ENCODE measurements at regions of chr12 and their contacts with region 1.

Region 1: DNA sequence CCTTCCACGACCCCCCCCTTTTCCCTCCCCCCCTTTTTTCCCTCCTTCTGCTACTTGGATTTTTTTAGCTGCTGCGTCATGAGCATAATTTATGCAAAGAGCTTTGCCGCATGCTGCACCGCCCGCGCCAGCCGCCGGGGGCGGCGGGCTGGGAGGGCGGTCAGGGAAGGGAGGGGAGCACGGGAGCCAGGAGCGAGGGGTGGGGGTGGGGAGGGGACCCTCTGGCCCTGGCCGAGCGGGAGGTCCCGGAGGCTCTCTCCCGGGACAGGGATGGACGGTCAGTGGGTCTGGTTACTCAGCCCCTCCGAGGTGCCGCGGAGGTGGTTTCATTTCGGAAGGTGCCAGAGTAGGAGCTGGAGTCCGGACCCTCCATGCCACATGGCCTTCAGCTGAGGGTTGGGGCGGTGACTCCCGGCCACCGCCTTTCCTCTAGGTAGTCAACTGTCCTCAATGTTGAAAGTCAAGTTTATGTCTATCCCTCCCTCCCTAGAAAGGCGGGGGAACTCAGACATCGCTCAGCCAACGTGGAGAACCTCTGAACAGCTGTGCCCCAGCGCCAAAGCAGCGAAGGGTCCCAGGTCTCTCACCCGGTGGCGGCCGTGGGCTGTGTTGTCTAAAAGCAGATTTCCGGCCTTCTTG is at the start of gene POU6F1:
- DNase-seq: peak; percentile 76 to 82 (median 80)
- H3K4me3 ChIP-seq: peak within 1 kb of the TSS; percentile 90 to 99
- H3K4me3 Mint-ChIP-seq: peak within 1 kb of the TSS; percentile 90 to 96 (median 94)
- H3K27ac ChIP-seq: peak within 1 kb of the TSS; percentile 91
- H3K27ac Mint-ChIP-seq: peak within 1 kb of the TSS; percentile 94 to 99 (median 97)
- H3K4me1 ChIP-seq: peaks cover 25% of the 10 kb centered on the region
- H3K4me1 Mint-ChIP-seq: peaks cover 19 to 39% (median 29%) of the 10 kb centered on the region in 4 donors
- H3K27me3 ChIP-seq: no peaks in the 10 kb centered on the region
- H3K27me3 Mint-ChIP-seq: no peaks in the 10 kb centered on the region
- total RNA-seq, gene POU6F1: 71.9 to 79.8 TPM

Region 2: DNA sequence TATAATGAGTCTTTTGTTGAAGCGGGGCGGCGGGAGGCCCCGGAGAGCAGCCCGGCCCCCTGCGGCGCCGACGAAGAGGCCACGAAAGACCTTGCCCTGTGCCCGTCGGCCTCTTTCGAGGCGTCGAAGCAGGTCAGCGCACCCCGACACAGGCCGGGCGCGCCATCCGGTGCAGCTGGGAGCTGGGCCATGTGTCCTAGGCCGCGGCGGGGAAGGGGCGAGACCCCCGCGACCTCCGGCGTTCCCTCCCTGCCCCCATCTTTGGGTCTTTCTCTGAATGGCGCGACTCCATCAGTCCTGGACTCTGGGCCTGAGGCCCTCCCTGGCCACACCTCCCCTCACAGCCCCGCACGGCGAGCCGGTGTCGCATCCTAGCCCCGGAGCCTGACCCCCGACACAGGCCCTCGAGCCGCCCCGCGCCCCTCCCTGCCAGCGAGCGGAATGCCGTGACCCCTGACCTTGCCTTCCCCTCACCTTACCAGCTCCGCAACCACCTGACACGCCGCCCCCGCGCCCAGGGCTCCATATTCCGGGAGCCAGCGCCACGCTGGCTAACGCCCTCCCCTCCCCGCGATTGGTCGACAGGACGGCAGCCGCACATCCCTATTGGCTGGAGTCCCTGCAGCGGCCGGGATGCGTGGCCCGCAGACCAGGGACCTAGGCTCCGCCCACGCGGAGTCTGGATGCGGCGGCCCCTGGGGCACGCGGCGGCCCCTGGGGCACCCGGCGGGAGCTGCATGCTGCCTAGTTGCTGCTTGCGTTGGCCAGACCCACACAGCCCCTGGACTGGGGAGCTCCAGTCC is 192.1 kb before region 1 on chr12 and contains the start of gene SLC11A2:
- CTCF ChIA-PET with region 1: interaction called, 3 read pairs
- POLR2A ChIA-PET with region 1: interaction called, 14 read pairs
- intact Hi-C with region 1: no loop called
- DNase-seq: peak; percentile 89 to 93 (median 89)
- H3K4me3 ChIP-seq: peak within 1 kb of the TSS; percentile 78 to 89
- H3K4me3 Mint-ChIP-seq: peak within 1 kb of the TSS; percentile 97 to 100 (median 98)
- H3K27ac ChIP-seq: peak within 1 kb of the TSS; percentile 83
- H3K27ac Mint-ChIP-seq: peak within 1 kb of the TSS; percentile 95 to 99 (median 98)
- H3K4me1 ChIP-seq: peaks cover 41% of the 10 kb centered on the region
- H3K4me1 Mint-ChIP-seq: peaks cover 26 to 68% (median 47%) of the 10 kb centered on the region in 4 donors
- H3K27me3 ChIP-seq: no peaks in the 10 kb centered on the region
- H3K27me3 Mint-ChIP-seq: no peaks in the 10 kb centered on the region
- total RNA-seq, gene SLC11A2: 55.1 to 62.7 TPM

Region 3: GRCh38 chr12:51083126-51083833 is 134.8 kb before region 1 on chr12 and contains the start of gene CSRNP2:
- CTCF ChIA-PET with region 1: interaction called, 3 read pairs
- POLR2A ChIA-PET with region 1: interaction called, 26 read pairs
- intact Hi-C with region 1: no loop called
- DNase-seq: peak; percentile 94 to 96 (median 95)
- H3K4me3 ChIP-seq: peak within 1 kb of the TSS; percentile 67 to 93
- H3K4me3 Mint-ChIP-seq: peak within 1 kb of the TSS; percentile 93 to 98 (median 96)
- H3K27ac ChIP-seq: peak within 1 kb of the TSS; percentile 86
- H3K27ac Mint-ChIP-seq: peak within 1 kb of the TSS; percentile 88 to 97 (median 95)
- H3K4me1 ChIP-seq: peaks cover 21% of the 10 kb centered on the region
- H3K4me1 Mint-ChIP-seq: peaks cover 28 to 45% (median 36%) of the 10 kb centered on the region in 4 donors
- H3K27me3 ChIP-seq: no peaks in the 10 kb centered on the region
- H3K27me3 Mint-ChIP-seq: no peaks in the 10 kb centered on the region
- total RNA-seq, gene CSRNP2: 34.1 to 35.0 TPM

Region 4: GRCh38 chr12:51172515-51173431 is 45.3 kb before region 1 on chr12 and contains the start of gene TFCP2:
- CTCF ChIA-PET with region 1: interaction called, 4 read pairs
- POLR2A ChIA-PET with region 1: interaction called, 13 read pairs
- intact Hi-C with region 1: loop called (anchors 1 kb)
- DNase-seq: peak; percentile 91 to 96 (median 92)
- H3K4me3 ChIP-seq: peak within 1 kb of the TSS; percentile 72 to 87
- H3K4me3 Mint-ChIP-seq: peak within 1 kb of the TSS in 7 of 8 donors; percentile 71 to 92 (median 85)
- H3K27ac ChIP-seq: peak within 1 kb of the TSS; percentile 96
- H3K27ac Mint-ChIP-seq: peak within 1 kb of the TSS in 6 of 7 donors; percentile 78 to 96 (median 91)
- H3K4me1 ChIP-seq: peaks cover 26% of the 10 kb centered on the region
- H3K4me1 Mint-ChIP-seq: peaks cover 10 to 22% (median 11%) of the 10 kb centered on the region in 4 donors
- H3K27me3 ChIP-seq: no peaks in the 10 kb centered on the region
- H3K27me3 Mint-ChIP-seq: no peaks in the 10 kb centered on the region
- total RNA-seq, gene TFCP2: 36.4 to 40.0 TPM

Region 5: DNA sequence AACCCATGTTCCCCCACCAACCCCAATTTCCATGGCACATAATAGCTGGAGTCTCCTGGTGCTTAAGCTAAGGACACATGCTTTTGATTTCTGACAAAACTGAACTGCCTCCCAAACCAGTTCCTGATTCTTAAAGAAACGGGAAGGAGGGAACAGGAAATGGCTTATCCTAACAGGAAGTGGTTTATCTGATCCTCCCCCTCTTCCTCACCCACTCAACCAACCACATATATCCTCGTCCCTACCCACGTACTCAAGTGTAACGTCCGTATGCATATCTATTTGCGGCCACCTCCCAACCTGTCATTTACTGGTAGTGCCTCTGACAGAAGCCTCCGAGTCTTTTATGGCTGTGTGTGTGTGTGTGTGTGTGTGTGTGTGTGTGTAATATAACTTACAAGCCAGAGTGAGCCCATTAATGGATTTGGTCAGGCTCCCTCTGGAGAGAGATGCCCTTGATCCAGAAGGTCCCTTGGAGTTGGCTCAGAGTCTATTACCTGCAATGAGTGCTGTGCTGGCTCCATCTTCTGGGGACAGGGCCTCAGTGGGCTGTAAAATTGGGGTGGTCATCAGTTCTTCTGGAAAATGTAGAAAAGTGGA is 28.3 kb after region 1 on chr12:
- CTCF ChIA-PET with region 1: interaction called, 10 read pairs
- POLR2A ChIA-PET with region 1: interaction called, 177 read pairs
- intact Hi-C with region 1: no loop called
- DNase-seq: peak; percentile 38 to 71 (median 57)
- H3K4me3 ChIP-seq: no peak overlapping the region
- H3K4me3 Mint-ChIP-seq: peak overlapping the region in 7 of 8 donors; percentile 32 to 58 (median 45)
- H3K27ac ChIP-seq: peak overlapping the region; percentile 42
- H3K27ac Mint-ChIP-seq: peak overlapping the region; percentile 88 to 100 (median 92)
- H3K4me1 ChIP-seq: peaks cover 53% of the 10 kb centered on the region
- H3K4me1 Mint-ChIP-seq: peaks cover 44 to 75% (median 55%) of the 10 kb centered on the region in 4 donors
- H3K27me3 ChIP-seq: no peaks in the 10 kb centered on the region
- H3K27me3 Mint-ChIP-seq: no peaks in the 10 kb centered on the region

Region 6: GRCh38 chr12:51320695-51321320 is 102.7 kb after region 1 on chr12:
- CTCF ChIA-PET with region 1: interaction called, 6 read pairs
- POLR2A ChIA-PET with region 1: interaction called, 18 read pairs
- intact Hi-C with region 1: no loop called
- DNase-seq: peak in 1 of 5 donors; percentile 29
- H3K4me3 ChIP-seq: peak overlapping the region; percentile 61 to 73
- H3K4me3 Mint-ChIP-seq: peak overlapping the region; percentile 82 to 99 (median 96)
- H3K27ac ChIP-seq: peak overlapping the region; percentile 94
- H3K27ac Mint-ChIP-seq: peak overlapping the region; percentile 95 to 98 (median 98)
- H3K4me1 ChIP-seq: peaks cover 78% of the 10 kb centered on the region
- H3K4me1 Mint-ChIP-seq: peaks cover 53 to 93% (median 72%) of the 10 kb centered on the region in 4 donors
- H3K27me3 ChIP-seq: no peaks in the 10 kb centered on the region
- H3K27me3 Mint-ChIP-seq: no peaks in the 10 kb centered on the region

Region 7: DNA sequence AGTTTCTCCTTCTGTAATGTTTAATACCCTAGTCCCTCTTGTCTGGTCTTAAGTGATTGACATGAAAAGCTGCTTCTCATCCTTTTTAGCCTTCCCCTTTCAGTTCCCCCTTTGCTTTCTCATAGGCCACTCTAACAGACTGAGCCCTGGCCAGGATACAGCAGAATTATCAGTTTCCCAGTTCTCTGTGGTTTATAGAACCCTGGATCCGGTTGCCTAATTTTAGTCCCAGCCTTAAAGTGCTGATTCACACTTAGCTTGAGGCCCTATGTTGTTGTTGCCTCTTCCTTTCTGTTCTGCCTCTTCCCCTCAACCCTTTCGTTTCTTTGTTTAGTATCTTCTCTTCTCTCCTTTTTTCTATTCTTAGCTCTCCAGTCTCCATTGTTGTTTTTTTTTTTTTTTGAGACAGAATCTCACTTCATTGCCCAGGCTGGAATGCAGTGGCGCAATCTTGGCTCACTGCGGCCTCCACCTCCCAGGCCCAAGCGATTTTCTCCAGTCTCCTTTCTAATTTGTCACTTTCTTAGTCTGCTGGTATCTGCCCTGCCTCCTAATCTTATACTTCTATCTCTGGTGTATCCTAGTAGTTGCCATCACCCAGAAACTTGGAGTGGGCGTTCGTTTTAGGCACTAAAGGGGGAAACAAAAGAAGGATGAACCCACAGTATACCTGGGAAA is 108.8 kb after region 1 on chr12:
- CTCF ChIA-PET with region 1: interaction called, 3 read pairs
- POLR2A ChIA-PET with region 1: interaction called, 18 read pairs
- intact Hi-C with region 1: no loop called
- DNase-seq: no peak
- H3K4me3 ChIP-seq: no peak overlapping the region
- H3K4me3 Mint-ChIP-seq: peak overlapping the region in 7 of 8 donors; percentile 40 to 74 (median 64)
- H3K27ac ChIP-seq: peak overlapping the region; percentile 27
- H3K27ac Mint-ChIP-seq: peak overlapping the region; percentile 77 to 98 (median 94)
- H3K4me1 ChIP-seq: peaks cover 65% of the 10 kb centered on the region
- H3K4me1 Mint-ChIP-seq: peaks cover 51 to 91% (median 71%) of the 10 kb centered on the region in 4 donors
- H3K27me3 ChIP-seq: no peaks in the 10 kb centered on the region
- H3K27me3 Mint-ChIP-seq: no peaks in the 10 kb centered on the region

Region 8: GRCh38 chr12:51729331-51729730 is 511.2 kb after region 1 on chr12:
- CTCF ChIA-PET with region 1: no interaction called
- POLR2A ChIA-PET with region 1: no interaction called
- intact Hi-C with region 1: no loop called
- DNase-seq: no peak
- H3K4me3 ChIP-seq: no peak overlapping the region
- H3K4me3 Mint-ChIP-seq: no peak overlapping the region
- H3K27ac ChIP-seq: no peak overlapping the region
- H3K27ac Mint-ChIP-seq: no peak overlapping the region
- H3K4me1 ChIP-seq: no peaks in the 10 kb centered on the region
- H3K4me1 Mint-ChIP-seq: no peaks in the 10 kb centered on the region
- H3K27me3 ChIP-seq: no peaks in the 10 kb centered on the region
- H3K27me3 Mint-ChIP-seq: peaks cover 12 to 13% of the 10 kb centered on the region in 2 donors

Region 9: DNA sequence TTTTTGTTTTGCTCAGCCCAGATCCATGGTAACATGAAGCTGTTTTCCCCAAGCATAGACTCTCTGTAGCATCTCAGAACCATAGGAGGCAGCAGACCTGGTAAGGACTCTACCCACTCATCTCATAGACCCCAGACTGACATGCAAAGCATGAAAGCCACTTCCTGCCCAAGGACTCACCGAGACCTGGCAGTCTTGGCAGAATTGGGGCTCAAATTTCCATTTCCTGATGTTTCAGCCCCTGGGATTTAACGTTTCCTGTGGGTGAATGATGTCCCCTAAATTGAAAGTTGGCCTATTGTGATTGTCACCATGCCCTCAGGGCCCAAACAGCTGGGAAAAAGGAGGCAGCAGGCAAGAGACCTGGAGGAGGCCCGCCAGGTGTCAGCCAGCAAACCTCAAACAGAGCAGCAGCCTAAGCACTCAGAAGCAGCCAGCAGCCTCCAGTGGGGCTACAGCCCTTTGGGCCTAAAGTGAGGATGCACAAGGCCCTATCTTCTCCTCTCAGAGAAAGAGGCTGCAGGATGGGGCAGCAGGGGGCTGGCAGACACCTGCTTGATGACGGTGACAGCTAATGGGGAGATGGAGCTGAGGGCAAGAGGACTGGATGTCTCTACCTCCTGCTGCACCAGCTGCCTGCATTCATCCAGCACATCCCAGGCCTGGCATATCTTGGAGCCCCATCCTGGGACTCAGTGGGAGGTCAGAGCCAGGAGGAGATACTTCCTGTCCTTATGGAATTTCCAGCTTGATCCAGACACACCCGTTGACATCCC is 1140.7 kb after region 1 on chr12:
- CTCF ChIA-PET with region 1: no interaction called
- POLR2A ChIA-PET with region 1: no interaction called
- intact Hi-C with region 1: no loop called
- DNase-seq: peak in 4 of 5 donors; percentile 3 to 26 (median 14)
- H3K4me3 ChIP-seq: no peak overlapping the region
- H3K4me3 Mint-ChIP-seq: peak overlapping the region in 2 of 8 donors; percentile 15 to 40
- H3K27ac ChIP-seq: no peak overlapping the region
- H3K27ac Mint-ChIP-seq: peak overlapping the region in 2 of 7 donors; percentile 9 to 30
- H3K4me1 ChIP-seq: peaks cover 12% of the 10 kb centered on the region
- H3K4me1 Mint-ChIP-seq: peaks cover 9 to 20% (median 10%) of the 10 kb centered on the region in 4 donors
- H3K27me3 ChIP-seq: no peaks in the 10 kb centered on the region
- H3K27me3 Mint-ChIP-seq: peaks cover 6 to 8% of the 10 kb centered on the region in 2 donors